HEK293 (cell line): ENCODE measurements at regions of chr17 and their contacts with region 1.

Region 1: GRCh38 chr17:78360371-78361224 is 721 bp upstream of the SOCS3 start:
- H3K4me3 ChIP-seq: peak overlapping the region; percentile 76
- H3K27ac ChIP-seq: peak overlapping the region; percentile 67; the same call in 1 of the 2 replicates
- H3K4me1 ChIP-seq: peaks cover 7% of the 10 kb centered on the region
- CTCF ChIP-seq: peak; percentile 96

Region 2: DNA sequence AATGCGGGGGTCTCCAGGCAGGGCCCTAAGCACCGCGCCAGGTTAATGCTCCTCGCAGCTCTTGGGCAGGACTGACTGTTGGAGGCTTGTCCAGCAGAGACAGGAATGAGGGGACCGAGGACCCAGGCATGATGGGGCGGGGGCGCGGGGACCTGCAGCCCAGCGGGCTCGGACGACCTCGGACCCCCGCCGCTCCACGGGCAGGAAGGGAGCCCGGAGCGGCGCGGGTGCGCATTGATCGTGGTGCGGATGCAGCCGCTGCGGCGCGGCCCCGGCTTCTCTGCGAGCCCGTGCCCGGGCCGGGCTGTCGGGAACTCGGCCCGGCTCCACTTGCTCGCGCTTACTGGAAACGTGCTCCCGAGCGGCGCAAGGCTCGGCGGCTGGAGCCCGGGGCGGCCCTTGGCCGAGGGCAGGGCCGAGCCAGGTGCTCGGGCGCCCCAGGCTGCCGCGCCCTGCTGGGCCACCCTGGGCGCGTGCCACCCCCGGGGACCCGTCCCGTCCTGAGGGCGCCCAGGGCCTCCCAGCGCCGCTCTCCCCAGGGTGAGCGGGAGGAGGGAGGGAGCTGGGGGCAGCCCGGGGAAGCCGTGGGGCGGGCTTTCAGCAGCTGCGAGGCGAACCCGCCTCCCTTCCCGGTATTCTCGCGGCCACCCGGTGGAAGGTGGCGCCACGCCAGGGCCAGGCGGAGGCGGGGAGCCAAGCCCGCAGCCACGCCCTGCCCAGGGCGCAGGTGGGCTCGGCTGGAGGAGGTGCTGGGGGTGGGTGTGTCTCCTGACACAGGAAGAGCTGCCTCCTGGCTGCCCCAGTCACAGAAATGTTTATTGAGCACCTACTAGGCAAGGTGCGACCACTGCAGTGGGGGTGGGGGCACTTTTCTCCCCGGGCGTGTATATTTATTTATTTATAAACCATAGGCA is 46.6 kb before region 1 on chr17:
- CTCF ChIA-PET with region 1: interaction called, 13 read pairs
- POLR2A ChIA-PET with region 1: interaction called, 12 read pairs
- H3K4me3 ChIP-seq: peak overlapping the region; percentile 36
- H3K27ac ChIP-seq: peak overlapping the region; percentile 80
- H3K4me1 ChIP-seq: peaks cover 28% of the 10 kb centered on the region
- CTCF ChIP-seq: no peak

Region 3: DNA sequence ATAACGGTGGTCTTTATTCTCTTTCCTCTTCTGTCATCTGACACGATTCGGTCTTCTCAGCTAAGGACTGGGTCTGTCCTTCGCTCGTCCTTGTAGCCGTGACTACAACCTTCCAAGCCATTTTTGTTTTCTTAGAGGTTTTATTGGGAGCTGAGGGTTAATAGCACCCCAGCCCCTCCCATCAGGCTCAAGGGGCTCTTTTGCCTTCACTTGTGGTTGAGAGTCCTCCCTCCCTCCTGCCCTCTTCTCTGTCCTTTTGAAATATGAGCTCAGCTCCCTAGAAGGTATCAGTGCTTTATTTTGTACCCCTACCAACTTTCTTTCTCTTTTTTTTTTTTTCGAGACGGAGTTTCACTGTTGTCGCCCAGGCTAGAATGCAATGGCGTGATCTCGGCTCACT is 25.4 kb before region 1 on chr17:
- CTCF ChIA-PET with region 1: interaction called, 11 read pairs
- POLR2A ChIA-PET with region 1: interaction called, 3 read pairs
- H3K4me3 ChIP-seq: no peak overlapping the region
- H3K27ac ChIP-seq: no peak overlapping the region
- H3K4me1 ChIP-seq: peaks cover 4% of the 10 kb centered on the region; the same call in 1 of the 2 replicates
- CTCF ChIP-seq: no peak

Region 4: DNA sequence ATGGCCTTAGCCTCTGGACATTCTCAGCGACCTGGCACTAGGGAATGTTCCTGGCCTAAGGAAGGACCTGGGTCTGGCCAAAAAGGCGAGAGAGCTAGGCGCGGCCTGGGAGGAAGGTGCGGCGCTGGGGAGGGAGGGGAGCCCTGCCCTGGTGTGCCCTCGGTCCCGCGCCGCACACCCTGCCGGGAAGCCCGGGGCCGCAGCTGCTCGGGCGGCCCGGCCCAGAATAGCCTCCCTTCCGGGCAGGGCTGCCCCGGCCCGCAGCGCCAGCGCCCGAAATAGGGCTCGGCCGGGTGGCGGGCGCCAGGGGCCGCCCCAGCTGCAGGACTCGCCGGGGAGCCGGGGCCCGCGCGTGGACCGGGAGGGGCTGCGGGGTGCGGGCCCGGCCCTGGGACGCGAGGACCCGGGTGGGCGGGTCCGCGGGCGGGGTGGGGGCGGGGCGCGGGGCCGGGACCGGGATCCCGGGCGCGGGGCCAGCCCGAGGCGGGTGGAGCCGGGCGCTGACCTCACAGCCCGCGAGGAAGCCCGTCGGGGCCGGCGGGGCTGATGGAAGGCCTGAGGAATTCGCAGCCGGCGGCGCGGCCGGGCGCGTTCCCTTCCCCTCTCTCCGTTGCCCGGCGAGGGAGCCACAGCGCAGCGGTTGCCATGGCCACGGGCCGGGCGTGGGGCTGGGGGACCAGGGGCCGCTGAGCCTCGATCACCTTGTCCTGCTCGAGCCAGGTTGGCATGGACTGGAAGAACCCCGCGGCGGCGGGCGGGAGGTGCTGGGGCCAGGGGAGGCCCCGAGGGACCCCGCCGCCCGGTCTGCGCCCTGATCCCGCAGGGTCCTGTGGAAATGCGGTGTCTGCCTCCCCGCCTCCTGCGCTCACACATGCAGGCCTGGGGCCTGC is 18.8 kb before region 1 on chr17:
- CTCF ChIA-PET with region 1: interaction called, 13 read pairs
- POLR2A ChIA-PET with region 1: interaction called, 10 read pairs
- H3K4me3 ChIP-seq: peak overlapping the region; percentile 14
- H3K27ac ChIP-seq: no peak overlapping the region; the same call in 1 of the 2 replicates
- H3K4me1 ChIP-seq: peaks cover 6% of the 10 kb centered on the region; the same call in 1 of the 2 replicates
- CTCF ChIP-seq: no peak

Region 5: DNA sequence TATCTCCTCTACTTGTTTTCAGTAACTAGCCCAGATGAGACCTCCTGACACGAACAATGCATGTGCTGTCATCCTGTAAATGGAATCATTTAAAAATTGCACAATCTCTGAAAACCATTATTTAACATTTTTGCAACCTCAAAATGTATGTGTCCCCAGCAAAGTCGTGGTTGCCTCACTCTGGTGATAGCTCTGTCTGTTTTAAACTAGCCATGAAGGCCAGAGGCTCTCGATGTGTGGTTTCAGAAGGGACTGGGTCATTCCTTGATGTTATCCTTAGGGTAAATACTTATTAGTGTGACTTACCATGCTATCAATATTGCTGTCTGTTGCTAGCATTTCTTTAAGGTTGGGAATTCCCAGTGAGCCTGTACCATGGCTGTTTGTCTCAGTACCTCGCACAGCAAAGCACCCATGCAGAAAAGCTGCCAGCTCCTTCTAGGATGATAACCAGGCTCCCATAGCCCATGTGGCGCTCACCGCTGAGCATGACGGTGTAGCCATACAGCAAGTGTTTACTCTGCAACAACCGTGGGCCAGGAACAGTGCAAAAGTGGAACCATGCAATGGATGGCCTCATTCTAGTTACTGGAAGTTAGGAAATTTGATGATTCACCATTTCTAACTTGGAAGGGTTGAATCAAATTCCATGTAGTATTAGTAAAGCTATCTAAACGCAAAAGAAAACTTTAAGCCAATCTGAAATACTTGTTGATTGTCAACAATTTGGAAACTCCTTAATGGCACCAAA is 15.0 kb after region 1 on chr17:
- CTCF ChIA-PET with region 1: interaction called, 53 read pairs
- POLR2A ChIA-PET with region 1: interaction called, 6 read pairs
- H3K4me3 ChIP-seq: no peak overlapping the region
- H3K27ac ChIP-seq: no peak overlapping the region
- H3K4me1 ChIP-seq: no peaks in the 10 kb centered on the region
- CTCF ChIP-seq: no peak

Region 6: GRCh38 chr17:78448356-78448993 is 87.9 kb after region 1 on chr17:
- CTCF ChIA-PET with region 1: no interaction called
- POLR2A ChIA-PET with region 1: no interaction called
- H3K4me3 ChIP-seq: no peak overlapping the region
- H3K27ac ChIP-seq: no peak overlapping the region
- H3K4me1 ChIP-seq: no peaks in the 10 kb centered on the region
- CTCF ChIP-seq: no peak